GM10248 (cell line): ENCODE measurements at regions of chr7 and their contacts with region 1.

Region 1: DNA sequence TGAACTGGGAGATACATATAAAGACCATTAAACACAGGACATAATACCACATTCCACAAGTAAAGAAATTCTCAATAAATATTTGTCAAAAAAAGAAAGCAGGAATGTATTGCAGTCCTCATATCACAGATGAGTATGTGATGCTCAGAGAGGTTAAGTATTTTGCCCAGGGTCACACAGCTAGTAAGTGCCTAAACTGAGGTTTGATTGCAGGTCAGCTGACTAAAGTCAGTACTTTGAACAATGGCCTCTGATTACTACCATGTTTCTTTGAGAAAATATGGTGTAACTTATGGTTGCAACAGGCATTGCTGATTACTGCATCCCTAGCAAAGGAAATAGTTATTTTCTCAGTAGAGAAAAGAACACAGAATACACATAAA is 267.1 kb downstream of the ELMO1 start:
- DNase-seq: no peak
- CTCF ChIP-seq: no peak

Region 2: DNA sequence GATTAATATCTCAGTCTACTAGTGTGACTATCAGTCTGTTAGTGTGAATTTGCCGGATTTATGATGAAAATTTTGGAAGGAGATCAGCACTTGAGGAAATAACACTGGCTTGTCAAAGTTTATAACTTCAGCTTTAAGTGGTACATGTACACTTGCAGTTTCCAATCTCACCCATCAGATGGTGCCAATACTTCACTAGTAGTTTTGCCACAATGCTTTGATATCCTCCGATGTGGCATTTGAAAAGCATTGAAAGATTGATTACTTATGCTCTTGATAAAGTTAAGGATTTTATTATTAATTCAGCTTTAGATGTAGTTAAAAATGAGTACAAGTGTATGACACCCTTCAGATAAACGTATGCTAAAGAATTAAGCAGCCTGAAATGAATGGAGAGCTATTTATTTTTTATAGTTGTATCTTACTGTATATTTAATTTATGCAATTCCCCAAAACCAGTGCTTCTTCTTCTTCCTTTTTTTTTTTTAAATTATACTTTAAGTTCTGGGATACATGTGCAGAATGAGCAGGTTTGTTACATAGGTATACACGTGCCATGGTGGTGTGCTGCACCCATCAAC is 693.7 kb before region 1 on chr7:
- CTCF ChIA-PET with region 1: interaction called, 37 read pairs
- POLR2A ChIA-PET with region 1: no interaction called
- DNase-seq: peak; percentile 37
- CTCF ChIP-seq: peak; percentile 48

Region 3: DNA sequence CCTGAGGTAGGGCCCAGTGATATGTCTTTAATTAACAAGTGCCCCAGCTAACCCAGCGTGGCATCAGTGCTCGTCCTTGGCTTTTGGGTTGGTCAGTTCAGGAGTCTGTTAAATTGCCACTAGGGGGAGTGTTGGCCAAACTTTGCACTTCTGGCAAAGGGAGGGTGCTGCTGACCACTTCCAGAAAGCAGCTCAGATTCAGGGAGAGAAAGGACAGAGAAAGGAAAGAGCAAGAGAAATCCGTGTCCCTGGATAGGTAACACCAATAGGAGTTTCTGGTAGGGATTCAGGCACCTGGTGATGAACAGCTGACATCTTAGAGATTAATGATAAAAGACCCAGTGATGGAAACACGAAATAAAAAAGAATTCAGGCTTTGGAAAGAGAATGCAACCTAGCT is 214.2 kb before region 1 on chr7:
- CTCF ChIA-PET with region 1: interaction called, 11 read pairs
- POLR2A ChIA-PET with region 1: no interaction called
- DNase-seq: peak; percentile 34
- CTCF ChIP-seq: peak; percentile 33

Region 4: GRCh38 chr7:36994456-36995112 is 187.0 kb before region 1 on chr7:
- CTCF ChIA-PET with region 1: interaction called, 14 read pairs
- POLR2A ChIA-PET with region 1: no interaction called
- DNase-seq: no peak
- CTCF ChIP-seq: no peak

Region 5: DNA sequence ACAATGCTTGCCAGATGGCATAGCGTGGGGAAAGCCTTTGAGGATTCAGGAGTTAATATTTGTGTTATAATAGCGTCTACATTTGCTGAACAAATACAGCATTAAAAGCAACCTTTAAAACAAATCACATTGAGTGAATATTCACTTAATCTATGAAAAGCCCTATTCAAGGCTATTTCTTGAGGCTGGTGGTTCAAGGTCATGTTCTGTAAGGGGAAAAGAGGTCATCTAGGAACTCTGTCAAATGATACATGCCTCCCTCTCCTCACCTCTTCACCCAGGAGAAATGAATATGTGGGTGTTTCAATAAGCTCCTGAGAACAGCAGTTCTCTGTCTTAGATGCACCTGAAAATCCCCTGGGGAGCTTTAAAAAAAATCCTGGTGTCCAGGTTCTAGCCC is 35.9 kb before region 1 on chr7:
- CTCF ChIA-PET with region 1: interaction called, 11 read pairs
- POLR2A ChIA-PET with region 1: no interaction called
- DNase-seq: no peak
- CTCF ChIP-seq: no peak

Region 6: GRCh38 chr7:37201003-37201875 is 19.7 kb after region 1 on chr7:
- CTCF ChIA-PET with region 1: interaction called, 37 read pairs
- POLR2A ChIA-PET with region 1: no interaction called
- DNase-seq: peak; percentile 65
- CTCF ChIP-seq: peak; percentile 88